Endothelial cell of umbilical vein (primary cell): ENCODE measurements at regions of chr19 and their contacts with region 1.

Region 1: GRCh38 chr19:38361633-38362075 is 12.7 kb upstream of the PSMD8 start:
- DNase-seq: peak; percentile 65
- H3K4me3 ChIP-seq: peak overlapping the region; percentile 42 to 49 (median 45)
- H3K27ac ChIP-seq: no peak overlapping the region
- H3K4me1 ChIP-seq: peaks cover 3% of the 10 kb centered on the region
- H3K27me3 ChIP-seq: peaks cover 13 to 14% of the 10 kb centered on the region in 2 experiments
- CTCF ChIP-seq: peak in 1 of 2 donors; percentile 10
- POLR2A ChIP-seq: no peak

Region 2: DNA sequence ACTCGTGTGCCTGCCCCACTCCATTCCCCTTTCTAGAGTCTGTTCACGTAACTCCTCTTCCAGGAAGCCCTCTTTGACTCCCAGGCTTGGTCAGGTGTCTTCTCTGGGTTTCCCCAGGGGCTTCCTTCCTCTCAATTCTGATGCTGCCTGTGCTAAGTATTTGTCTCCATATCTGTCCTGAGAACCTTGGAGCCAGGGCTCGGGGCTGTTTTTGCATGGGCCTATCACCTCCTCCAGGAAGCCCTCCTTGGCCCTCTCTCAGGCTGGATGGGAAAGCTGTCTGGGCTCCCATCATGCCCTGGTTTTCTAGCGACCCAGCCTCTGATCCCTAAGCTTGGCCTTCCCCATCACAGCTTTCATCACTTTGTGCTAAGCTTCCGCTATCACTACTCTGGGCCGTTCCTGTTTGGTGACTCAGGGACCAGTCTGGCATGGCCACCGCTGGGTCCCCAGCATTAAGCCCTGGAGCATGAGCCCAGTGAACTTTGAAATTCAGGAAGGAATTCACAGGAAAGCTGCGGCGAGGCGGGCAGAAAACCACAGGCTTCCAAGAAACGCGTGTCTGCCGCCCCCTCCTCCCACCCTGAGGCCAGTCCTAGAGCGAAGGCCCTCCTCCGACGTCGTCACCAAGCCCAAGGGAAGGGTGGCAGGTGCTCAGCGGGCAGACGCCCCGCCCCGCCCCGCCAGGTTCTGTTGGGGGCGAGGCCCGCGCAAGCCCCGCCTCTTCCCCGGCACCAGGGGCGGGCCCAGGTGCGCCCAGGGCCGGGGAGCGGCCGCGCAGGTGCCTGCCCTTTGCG is 97.8 kb before region 1 on chr19:
- CTCF ChIA-PET with region 1: no interaction called
- POLR2A ChIA-PET with region 1: no interaction called
- dilution Hi-C with region 1: no loop called
- intact Hi-C with region 1: no loop called
- DNase-seq: no peak
- H3K4me3 ChIP-seq: peak overlapping the region; percentile 14 to 47 (median 34)
- H3K27ac ChIP-seq: no peak overlapping the region
- H3K4me1 ChIP-seq: peaks cover 20% of the 10 kb centered on the region
- H3K27me3 ChIP-seq: no peaks in the 10 kb centered on the region
- CTCF ChIP-seq: no peak
- POLR2A ChIP-seq: no peak

Region 3: DNA sequence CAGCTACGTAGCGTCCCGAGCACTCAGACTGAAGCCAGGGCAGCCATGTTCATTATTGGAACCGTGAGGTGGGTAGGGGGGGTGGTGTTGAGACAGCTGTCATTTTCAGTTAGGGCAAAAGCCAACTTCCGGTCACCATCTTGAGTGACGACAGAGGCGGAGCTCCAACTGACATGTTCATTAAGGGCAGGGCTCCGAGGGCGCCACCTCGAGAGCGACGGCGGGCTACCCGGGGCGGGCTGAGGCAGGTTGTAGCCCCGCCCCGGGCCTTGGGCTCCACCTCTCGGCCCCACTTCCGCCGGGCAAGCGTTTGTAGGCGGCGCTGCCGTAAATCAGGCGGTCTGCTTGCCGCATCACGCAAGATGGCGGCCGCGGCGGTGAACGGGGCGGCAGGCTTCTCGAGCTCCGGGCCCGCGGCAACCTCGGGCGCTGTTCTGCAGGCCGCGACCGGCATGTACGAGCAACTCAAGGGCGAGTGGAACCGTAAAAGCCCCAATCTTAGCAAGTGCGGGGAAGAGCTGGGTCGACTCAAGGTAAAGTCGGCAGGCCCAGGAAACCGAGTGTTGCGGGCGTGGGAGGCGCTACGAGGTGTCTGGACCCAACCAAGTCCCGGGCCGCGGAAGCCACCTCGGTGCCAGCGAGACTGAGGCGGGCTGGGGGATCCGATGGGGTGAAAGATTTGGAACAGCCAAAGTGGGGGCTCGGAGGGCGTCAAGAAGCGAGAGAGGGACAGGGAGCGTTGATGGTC is 12.9 kb after region 1 on chr19 and contains the start of gene PSMD8:
- CTCF ChIA-PET with region 1: interaction called, 9 read pairs
- POLR2A ChIA-PET with region 1: interaction called, 7 read pairs
- dilution Hi-C with region 1: no loop called
- intact Hi-C with region 1: loop called (anchors 1 kb)
- DNase-seq: peak; percentile 99
- H3K4me3 ChIP-seq: peak within 1 kb of the TSS; percentile 70 to 86 (median 70)
- H3K27ac ChIP-seq: peak within 1 kb of the TSS; percentile 87
- H3K4me1 ChIP-seq: peaks cover 14% of the 10 kb centered on the region
- H3K27me3 ChIP-seq: peaks cover 3 to 4% of the 10 kb centered on the region in 2 experiments
- CTCF ChIP-seq: peak in 1 of 2 donors; percentile 33
- POLR2A ChIP-seq: peak; percentile 98
- total RNA-seq, gene PSMD8: 203 and 215 TPM in 2 replicates

Region 4: DNA sequence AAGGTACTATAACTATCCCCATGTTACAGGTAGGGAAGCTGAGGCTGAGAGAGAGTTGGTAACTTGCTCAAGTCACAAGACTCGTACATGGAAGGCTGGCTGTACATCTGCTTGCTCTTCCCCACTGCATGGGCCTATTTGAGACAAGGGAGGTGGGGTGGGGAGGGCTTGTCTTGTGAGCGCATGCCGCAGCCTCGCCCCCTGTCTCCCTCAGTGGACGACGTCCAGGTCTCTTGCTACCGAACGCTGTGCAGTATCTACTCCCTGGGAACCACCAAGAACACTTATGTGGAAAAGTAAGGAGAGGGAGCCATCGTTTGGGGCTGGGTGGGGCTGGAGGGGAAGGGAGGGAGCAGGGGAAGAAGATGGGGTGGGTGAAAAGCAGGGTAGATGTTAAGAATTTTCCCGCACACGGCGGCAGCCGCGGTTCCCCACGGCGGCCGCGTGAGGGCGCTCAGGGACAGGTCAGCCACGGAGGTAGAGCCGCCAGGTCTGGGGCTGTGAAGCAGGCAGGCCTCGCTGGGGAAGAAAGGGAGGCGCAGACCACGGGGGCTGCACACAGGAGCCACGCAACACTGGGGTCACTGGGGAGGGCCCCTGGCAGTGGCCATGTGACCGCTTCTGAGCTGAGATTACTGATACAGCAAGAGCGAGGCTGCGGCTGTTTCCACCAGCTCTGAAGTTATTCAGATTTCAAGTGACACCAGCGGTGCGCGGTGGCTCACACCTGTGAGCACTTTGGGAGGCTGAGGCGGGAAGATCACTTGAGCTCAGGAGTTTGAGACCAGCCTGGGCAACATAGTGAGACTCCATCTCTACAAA is 153.4 kb after region 1 on chr19:
- CTCF ChIA-PET with region 1: no interaction called
- POLR2A ChIA-PET with region 1: no interaction called
- dilution Hi-C with region 1: no loop called
- intact Hi-C with region 1: no loop called
- DNase-seq: peak; percentile 52
- H3K4me3 ChIP-seq: no peak overlapping the region
- H3K27ac ChIP-seq: no peak overlapping the region
- H3K4me1 ChIP-seq: no peaks in the 10 kb centered on the region
- H3K27me3 ChIP-seq: no peaks in the 10 kb centered on the region
- CTCF ChIP-seq: peak; percentile 72 to 95
- POLR2A ChIP-seq: no peak